Heart left ventricle (tissue), 16 donors: ENCODE measurements at regions of chr4 and their contacts with region 1.

Region 1: GRCh38 chr4:47873877-47874541 is 36.1 kb upstream of the CORIN start:
- DNase-seq: no peak
- ATAC-seq: no peak
- H3K4me3 ChIP-seq: no peak overlapping the region
- H3K27ac ChIP-seq: no peak overlapping the region
- H3K4me1 ChIP-seq: no peaks in the 10 kb centered on the region
- H3K27me3 ChIP-seq: no peaks in the 10 kb centered on the region
- CTCF ChIP-seq: no peak
- POLR2A ChIP-seq: no peak

Region 2: DNA sequence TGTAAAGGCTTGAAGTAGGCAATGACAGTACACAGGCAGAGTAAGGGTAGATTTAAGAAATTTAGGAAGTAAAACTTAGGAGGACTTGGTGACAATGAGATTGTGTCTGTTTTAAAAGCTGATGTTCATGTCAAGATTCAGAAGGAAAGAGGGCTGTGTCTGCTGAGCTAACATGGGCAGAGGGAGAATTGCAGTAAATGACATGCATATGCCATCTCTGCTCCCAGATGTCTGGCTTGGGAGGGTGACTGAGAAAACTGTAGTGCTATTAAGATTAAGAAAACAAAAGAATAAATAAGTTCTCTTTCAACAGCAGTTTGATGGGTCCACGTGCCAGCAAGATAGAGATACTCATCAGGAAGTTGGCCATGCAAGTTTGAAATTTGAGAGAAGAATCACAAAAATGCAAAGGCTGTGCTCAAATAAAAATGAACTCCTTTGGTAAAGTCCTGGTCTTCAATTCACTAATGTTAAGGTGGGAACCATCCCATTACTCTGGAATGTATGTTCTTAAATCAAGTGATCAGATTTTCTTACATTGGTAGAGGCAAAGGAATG is 33.2 kb after region 1 on chr4:
- intact Hi-C with region 1: loop called in 1 of 10 experiments (anchors 5 kb)
- DNase-seq: no peak
- ATAC-seq: no peak
- H3K4me3 ChIP-seq: no peak overlapping the region
- H3K27ac ChIP-seq: no peak overlapping the region
- H3K4me1 ChIP-seq: peaks cover 0 to 8% (median 0%) of the 10 kb centered on the region in 12 donors
- H3K27me3 ChIP-seq: no peaks in the 10 kb centered on the region
- CTCF ChIP-seq: no peak
- POLR2A ChIP-seq: no peak